Activated naive CD8-positive, alpha-beta T cell treated with anti-CD3 and anti-CD28 coated beads, Interleukin-2, amount 10 ng/mL, durations not matched to agents 7 days and 5 days (primary cell): ENCODE measurements at regions of chr7 and their contacts with region 1.

Region 1: GRCh38 chr7:64794171-64794844 is at the start of gene ZNF138:
- DNase-seq: peak; percentile 88
- ATAC-seq: peak; percentile 99
- H3K4me3 Mint-ChIP-seq: peak within 1 kb of the TSS; percentile 99
- H3K27ac Mint-ChIP-seq: peak within 1 kb of the TSS; percentile 99
- H3K4me1 Mint-ChIP-seq: peaks cover 12% of the 10 kb centered on the region
- H3K27me3 Mint-ChIP-seq: no peaks in the 10 kb centered on the region
- total RNA-seq, gene ZNF138: 12.5 to 14.0 TPM

Region 2: GRCh38 chr7:64313740-64314491 is 480.4 kb before region 1 on chr7 and contains the start of gene ZNF736:
- POLR2A ChIA-PET with region 1: interaction called, 10 read pairs
- DNase-seq: peak; percentile 80
- ATAC-seq: peak; percentile 100
- H3K4me3 Mint-ChIP-seq: peak within 1 kb of the TSS; percentile 99
- H3K27ac Mint-ChIP-seq: peak within 1 kb of the TSS; percentile 100
- H3K4me1 Mint-ChIP-seq: peaks cover 18% of the 10 kb centered on the region
- H3K27me3 Mint-ChIP-seq: no peaks in the 10 kb centered on the region
- total RNA-seq, gene ZNF736: 38.9 to 39.6 TPM

Region 3: GRCh38 chr7:64562626-64563275 is 231.6 kb before region 1 on chr7 and contains the start of gene ZNF680:
- POLR2A ChIA-PET with region 1: interaction called, 16 read pairs
- DNase-seq: peak; percentile 84
- ATAC-seq: peak; percentile 99
- H3K4me3 Mint-ChIP-seq: peak within 1 kb of the TSS; percentile 99
- H3K27ac Mint-ChIP-seq: peak within 1 kb of the TSS; percentile 100
- H3K4me1 Mint-ChIP-seq: peaks cover 5% of the 10 kb centered on the region
- H3K27me3 Mint-ChIP-seq: no peaks in the 10 kb centered on the region
- total RNA-seq, gene ZNF680: 21.8 to 23.7 TPM

Region 4: GRCh38 chr7:64832136-64832535 is 37.8 kb after region 1 on chr7:
- POLR2A ChIA-PET with region 1: no interaction called
- DNase-seq: no peak
- ATAC-seq: no peak
- H3K4me3 Mint-ChIP-seq: no peak overlapping the region
- H3K27ac Mint-ChIP-seq: no peak overlapping the region
- H3K4me1 Mint-ChIP-seq: no peaks in the 10 kb centered on the region
- H3K27me3 Mint-ChIP-seq: no peaks in the 10 kb centered on the region

Region 5: GRCh38 chr7:64902806-64903721 is 108.8 kb after region 1 on chr7 and contains the start of gene ZNF273:
- POLR2A ChIA-PET with region 1: interaction called, 25 read pairs
- DNase-seq: peak; percentile 83
- ATAC-seq: peak; percentile 99
- H3K4me3 Mint-ChIP-seq: peak within 1 kb of the TSS; percentile 97
- H3K27ac Mint-ChIP-seq: peak within 1 kb of the TSS; percentile 97
- H3K4me1 Mint-ChIP-seq: peaks cover 27% of the 10 kb centered on the region
- H3K27me3 Mint-ChIP-seq: no peaks in the 10 kb centered on the region
- total RNA-seq, gene ZNF273: 10.9 to 12.6 TPM

Region 6: GRCh38 chr7:65006094-65006992 is 212.0 kb after region 1 on chr7 and contains the start of gene ERV3-1:
- POLR2A ChIA-PET with region 1: interaction called, 15 read pairs
- DNase-seq: peak; percentile 83
- ATAC-seq: peak; percentile 100
- H3K4me3 Mint-ChIP-seq: peak within 1 kb of the TSS; percentile 95
- H3K27ac Mint-ChIP-seq: peak within 1 kb of the TSS; percentile 93
- H3K4me1 Mint-ChIP-seq: peaks cover 14% of the 10 kb centered on the region
- H3K27me3 Mint-ChIP-seq: no peaks in the 10 kb centered on the region
- total RNA-seq, gene ERV3-1: 16.9 to 17.3 TPM